ENCODE measurements at regions of chrX and their contacts with region 1.

Region 1: GRCh38 chrX:118571829-118572228 is 76.2 kb downstream of the DOCK11 start:
- DNase-seq: no peak
- H3K4me3 Mint-ChIP-seq: no peak overlapping the region
- H3K27ac Mint-ChIP-seq: no peak overlapping the region
- H3K4me1 Mint-ChIP-seq: peaks cover 9% of the 10 kb centered on the region
- H3K27me3 Mint-ChIP-seq: no peaks in the 10 kb centered on the region

Region 2: DNA sequence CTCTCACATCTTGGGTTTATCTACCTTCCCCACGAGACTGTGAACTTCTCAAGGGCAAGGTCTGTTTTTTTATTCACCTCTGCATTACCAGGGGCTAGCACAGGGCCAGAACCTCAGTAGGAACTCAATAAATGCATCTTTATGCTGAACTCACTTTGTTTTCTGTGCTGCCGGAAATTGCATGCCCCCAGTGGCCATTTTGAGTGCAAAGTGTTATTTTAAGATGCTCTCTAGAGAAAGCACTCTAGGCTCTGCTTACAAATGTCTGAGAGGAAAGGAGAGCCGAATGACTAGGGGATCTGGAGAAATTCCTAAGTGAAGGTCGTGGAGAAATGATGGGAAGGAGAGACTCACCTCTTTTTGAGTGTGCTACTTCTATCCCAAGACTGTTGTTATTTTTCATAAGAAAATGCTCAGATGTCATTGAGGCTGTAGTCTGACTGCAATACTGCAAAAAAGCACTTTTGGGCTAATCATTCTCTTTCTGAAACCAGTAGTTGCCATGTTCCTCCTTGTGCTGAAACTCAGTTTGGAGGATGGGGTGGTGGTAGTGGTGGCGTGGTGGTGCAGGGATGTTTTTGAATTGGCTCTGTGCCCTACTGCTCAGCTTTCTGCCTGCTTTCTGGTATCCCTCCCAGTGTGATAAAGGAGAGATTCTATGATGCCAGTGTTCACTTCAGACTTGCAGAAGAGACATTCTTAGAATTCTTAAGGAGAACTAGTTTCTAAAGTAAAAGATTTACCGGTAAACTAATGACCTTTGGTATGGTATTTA is 35.0 kb before region 1 on chrX:
- intact Hi-C with region 1: loop called (anchors 1 kb)
- DNase-seq: peak; percentile 82
- H3K4me3 Mint-ChIP-seq: peak overlapping the region; percentile 74
- H3K27ac Mint-ChIP-seq: peak overlapping the region; percentile 88
- H3K4me1 Mint-ChIP-seq: peaks cover 44% of the 10 kb centered on the region
- H3K27me3 Mint-ChIP-seq: no peaks in the 10 kb centered on the region